ENCODE measurements at regions of chr10 and their contacts with region 1.

Region 1: DNA sequence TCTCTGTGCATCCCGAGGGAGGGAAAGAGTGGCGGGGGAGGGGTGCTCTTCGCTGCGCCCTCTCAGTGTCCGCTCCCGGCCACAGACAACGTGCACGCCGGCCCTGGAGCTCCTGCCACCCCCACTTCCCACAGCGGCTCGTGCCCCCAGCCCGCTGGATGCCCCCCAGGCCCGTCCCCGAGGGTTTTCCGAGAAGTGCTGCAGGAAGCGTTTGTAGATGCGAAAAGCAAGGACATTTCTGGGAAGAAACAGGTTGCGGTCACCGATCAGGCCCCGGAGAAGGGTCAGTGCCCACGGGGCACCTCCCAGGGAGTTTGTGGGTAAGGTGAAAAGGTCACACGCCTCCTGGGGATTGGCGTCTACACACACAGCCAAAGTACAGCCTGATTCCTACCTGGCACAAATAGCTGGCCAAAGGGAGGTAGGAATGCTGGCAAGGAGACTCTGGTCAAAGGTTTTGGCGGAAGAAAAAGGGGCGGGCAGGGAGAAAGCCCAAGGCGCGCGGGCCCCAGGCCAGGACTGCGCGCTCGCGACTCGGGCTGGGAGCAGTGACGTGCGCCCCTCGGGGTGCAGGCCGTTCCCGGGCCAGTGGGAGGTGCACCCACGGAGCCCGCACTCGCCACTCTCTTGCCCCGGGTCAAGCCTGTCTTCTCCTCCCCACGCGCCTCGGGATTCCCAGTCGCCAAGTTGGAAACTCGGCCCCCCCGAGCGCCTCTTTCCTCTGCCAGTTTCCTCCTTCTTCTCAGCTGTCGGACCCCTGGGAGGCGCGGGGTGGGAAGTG is 1.5 kb upstream of the NRP1 start:
- DNase-seq: peak; percentile 100
- ATAC-seq: peak; percentile 46
- H3K4me3 ChIP-seq: peak overlapping the region; percentile 69
- H3K27ac ChIP-seq: peak overlapping the region; percentile 86
- H3K4me1 ChIP-seq: peaks cover 39% of the 10 kb centered on the region
- H3K27me3 ChIP-seq: no peaks in the 10 kb centered on the region
- CTCF ChIP-seq: 0 out of 2 replicates have a peak, but pooled peaks have one; percentile 24

Region 2: GRCh38 chr10:33109788-33110469 is 226.1 kb before region 1 on chr10:
- CTCF ChIA-PET with region 1: no interaction called
- POLR2A ChIA-PET with region 1: no interaction called
- intact Hi-C with region 1: no loop called
- DNase-seq: no peak
- ATAC-seq: no peak
- H3K4me3 ChIP-seq: no peak overlapping the region
- H3K27ac ChIP-seq: no peak overlapping the region
- H3K4me1 ChIP-seq: peaks cover 19% of the 10 kb centered on the region
- H3K27me3 ChIP-seq: no peaks in the 10 kb centered on the region
- CTCF ChIP-seq: no peak

Region 3: DNA sequence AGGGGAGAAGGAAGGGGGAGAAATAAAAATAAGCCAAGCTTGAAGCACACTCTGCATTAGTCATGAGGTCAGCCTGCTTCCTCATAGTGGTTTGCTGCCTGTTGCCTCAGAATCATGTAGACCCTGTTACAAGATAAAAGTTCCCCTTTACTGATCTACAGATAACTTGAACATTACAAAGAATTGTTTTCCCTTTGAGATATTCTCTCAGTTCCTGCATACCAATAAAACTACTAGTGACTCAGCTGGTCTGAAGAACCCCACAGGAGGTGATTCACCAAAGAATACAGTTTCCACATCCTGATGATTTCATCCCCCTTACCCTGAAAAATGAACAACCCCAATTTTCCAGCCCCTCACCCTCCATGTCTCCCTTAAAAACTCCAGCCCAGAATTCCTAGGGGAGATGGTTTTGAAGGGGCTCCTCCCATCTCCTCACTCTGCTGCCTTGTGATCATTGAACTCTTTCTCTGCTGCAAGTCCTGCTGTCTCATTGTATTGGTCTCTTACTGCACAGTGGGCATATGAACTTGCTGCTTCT is 29.9 kb after region 1 on chr10:
- CTCF ChIA-PET with region 1: interaction called, 8 read pairs
- POLR2A ChIA-PET with region 1: interaction called, 14 read pairs
- intact Hi-C with region 1: loop called (anchors 1 kb)
- DNase-seq: peak; percentile 100
- ATAC-seq: peak; percentile 90
- H3K4me3 ChIP-seq: peak overlapping the region; percentile 9; the same call in 1 of the 2 replicates
- H3K27ac ChIP-seq: peak overlapping the region; percentile 82
- H3K4me1 ChIP-seq: peaks cover 53% of the 10 kb centered on the region
- H3K27me3 ChIP-seq: no peaks in the 10 kb centered on the region
- CTCF ChIP-seq: no peak

Region 4: DNA sequence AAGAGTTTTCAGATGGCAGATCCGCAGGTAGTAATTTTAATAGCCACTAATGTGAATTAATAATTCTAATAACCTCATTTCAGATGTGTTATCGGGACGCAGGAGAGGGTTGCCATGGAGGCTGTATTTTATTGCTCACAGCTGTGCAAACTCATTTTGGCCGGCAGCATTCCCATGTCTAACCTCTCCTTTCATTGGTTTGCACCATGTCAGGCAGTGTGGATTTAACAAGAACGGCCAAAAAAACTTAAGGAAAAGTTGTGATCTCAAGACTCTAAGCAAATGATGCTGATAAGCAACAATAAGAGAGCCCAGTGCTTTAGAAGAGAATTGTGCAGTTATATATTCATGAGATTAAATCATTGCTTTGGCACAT is 87.2 kb after region 1 on chr10:
- CTCF ChIA-PET with region 1: no interaction called
- POLR2A ChIA-PET with region 1: no interaction called
- intact Hi-C with region 1: no loop called
- DNase-seq: no peak
- ATAC-seq: no peak
- H3K4me3 ChIP-seq: no peak overlapping the region
- H3K27ac ChIP-seq: no peak overlapping the region
- H3K4me1 ChIP-seq: peaks cover 7% of the 10 kb centered on the region
- H3K27me3 ChIP-seq: no peaks in the 10 kb centered on the region
- CTCF ChIP-seq: no peak

Region 5: GRCh38 chr10:33453081-33454025 is 117.4 kb after region 1 on chr10:
- CTCF ChIA-PET with region 1: interaction called, 4 read pairs
- POLR2A ChIA-PET with region 1: interaction called, 9 read pairs
- intact Hi-C with region 1: loop called (anchors 2 kb)
- DNase-seq: peak; percentile 100
- ATAC-seq: peak; percentile 93
- H3K4me3 ChIP-seq: peak overlapping the region; percentile 2; the same call in 1 of the 2 replicates
- H3K27ac ChIP-seq: peak overlapping the region; percentile 61
- H3K4me1 ChIP-seq: peaks cover 20% of the 10 kb centered on the region
- H3K27me3 ChIP-seq: no peaks in the 10 kb centered on the region
- CTCF ChIP-seq: no peak

Region 6: GRCh38 chr10:33476757-33477273 is 140.8 kb after region 1 on chr10:
- CTCF ChIA-PET with region 1: no interaction called
- POLR2A ChIA-PET with region 1: no interaction called
- intact Hi-C with region 1: loop called (anchors 1 kb)
- DNase-seq: no peak
- ATAC-seq: no peak
- H3K4me3 ChIP-seq: no peak overlapping the region
- H3K27ac ChIP-seq: no peak overlapping the region
- H3K4me1 ChIP-seq: 0 out of 2 replicates have a peak, but pooled peaks cover 8% of the 10 kb centered on the region
- H3K27me3 ChIP-seq: no peaks in the 10 kb centered on the region
- CTCF ChIP-seq: no peak

Region 7: DNA sequence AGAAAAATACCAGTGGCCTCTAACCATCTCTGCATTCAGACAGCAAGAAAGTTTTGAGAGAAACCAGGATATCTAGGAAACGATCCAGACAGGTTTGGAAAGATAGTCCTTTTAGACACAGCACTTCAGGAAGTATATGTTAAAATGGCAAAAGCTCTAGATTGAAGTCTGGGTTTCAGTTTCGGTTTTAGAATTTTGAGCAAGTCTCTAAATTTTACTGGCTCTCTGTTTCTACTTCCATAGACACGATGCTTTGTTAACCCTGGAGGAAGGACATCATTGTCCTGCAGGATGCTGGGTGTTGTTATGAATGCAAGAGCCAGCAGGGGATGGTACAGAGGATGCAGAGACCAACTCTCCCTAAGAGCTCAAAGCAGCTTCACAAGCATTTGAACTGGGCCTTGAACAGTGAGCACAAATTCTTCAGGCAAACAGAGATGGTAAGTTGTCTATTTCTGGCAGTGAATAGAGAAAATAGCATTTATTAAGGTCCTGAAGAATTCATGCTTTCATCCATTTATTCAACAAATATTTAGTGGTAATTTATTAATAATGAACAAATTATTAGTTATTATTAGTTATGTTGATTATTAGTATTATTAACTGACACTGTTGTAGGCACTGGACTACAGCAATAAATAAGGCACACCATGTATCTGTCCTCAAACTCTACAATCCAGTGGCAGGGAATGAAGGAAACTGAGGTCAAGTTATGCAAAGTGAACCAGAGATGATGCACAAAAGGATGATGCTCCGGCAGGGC is 151.2 kb after region 1 on chr10:
- CTCF ChIA-PET with region 1: no interaction called
- POLR2A ChIA-PET with region 1: no interaction called
- intact Hi-C with region 1: no loop called
- DNase-seq: peak; percentile 42
- ATAC-seq: peak; percentile 69
- H3K4me3 ChIP-seq: no peak overlapping the region
- H3K27ac ChIP-seq: no peak overlapping the region
- H3K4me1 ChIP-seq: no peaks in the 10 kb centered on the region
- H3K27me3 ChIP-seq: no peaks in the 10 kb centered on the region
- CTCF ChIP-seq: peak; percentile 46

Region 8: DNA sequence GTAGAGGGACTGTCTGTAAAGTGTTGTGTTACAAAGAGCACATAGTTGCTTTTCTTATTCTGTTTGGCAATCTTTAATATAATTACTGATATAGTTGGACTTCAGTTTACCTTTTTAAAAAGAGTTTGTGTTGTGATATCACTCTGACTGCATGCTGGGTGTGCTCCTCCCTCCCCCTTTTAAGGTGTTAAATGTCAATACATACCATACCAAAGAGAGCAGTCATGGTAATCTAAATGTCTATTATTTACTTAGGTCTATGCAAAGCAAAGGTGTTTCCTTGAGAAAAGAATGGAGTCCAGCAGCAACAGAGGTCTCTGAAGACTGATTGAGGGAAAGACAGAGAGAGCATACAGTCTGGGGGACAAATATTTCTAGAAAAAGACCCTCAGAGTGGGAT is 273.6 kb after region 1 on chr10:
- CTCF ChIA-PET with region 1: no interaction called
- POLR2A ChIA-PET with region 1: no interaction called
- intact Hi-C with region 1: loop called (anchors 1 kb)
- DNase-seq: peak; percentile 98
- ATAC-seq: peak; percentile 99
- H3K4me3 ChIP-seq: peak overlapping the region; percentile 1; the same call in 1 of the 2 replicates
- H3K27ac ChIP-seq: peak overlapping the region; percentile 41
- H3K4me1 ChIP-seq: peaks cover 19% of the 10 kb centered on the region
- H3K27me3 ChIP-seq: no peaks in the 10 kb centered on the region
- CTCF ChIP-seq: no peak

Region 9: GRCh38 chr10:33801748-33802147 is 465.8 kb after region 1 on chr10:
- CTCF ChIA-PET with region 1: no interaction called
- POLR2A ChIA-PET with region 1: interaction called, 4 read pairs
- intact Hi-C with region 1: loop called (anchors 1 kb)
- DNase-seq: peak; percentile 100
- ATAC-seq: peak; percentile 77
- H3K4me3 ChIP-seq: no peak overlapping the region
- H3K27ac ChIP-seq: peak overlapping the region; percentile 61
- H3K4me1 ChIP-seq: peaks cover 55% of the 10 kb centered on the region
- H3K27me3 ChIP-seq: no peaks in the 10 kb centered on the region
- CTCF ChIP-seq: no peak

Measured in PC-3 (cell line).